ENCODE measurements at regions of chr4 and their contacts with region 1.

Region 1: DNA sequence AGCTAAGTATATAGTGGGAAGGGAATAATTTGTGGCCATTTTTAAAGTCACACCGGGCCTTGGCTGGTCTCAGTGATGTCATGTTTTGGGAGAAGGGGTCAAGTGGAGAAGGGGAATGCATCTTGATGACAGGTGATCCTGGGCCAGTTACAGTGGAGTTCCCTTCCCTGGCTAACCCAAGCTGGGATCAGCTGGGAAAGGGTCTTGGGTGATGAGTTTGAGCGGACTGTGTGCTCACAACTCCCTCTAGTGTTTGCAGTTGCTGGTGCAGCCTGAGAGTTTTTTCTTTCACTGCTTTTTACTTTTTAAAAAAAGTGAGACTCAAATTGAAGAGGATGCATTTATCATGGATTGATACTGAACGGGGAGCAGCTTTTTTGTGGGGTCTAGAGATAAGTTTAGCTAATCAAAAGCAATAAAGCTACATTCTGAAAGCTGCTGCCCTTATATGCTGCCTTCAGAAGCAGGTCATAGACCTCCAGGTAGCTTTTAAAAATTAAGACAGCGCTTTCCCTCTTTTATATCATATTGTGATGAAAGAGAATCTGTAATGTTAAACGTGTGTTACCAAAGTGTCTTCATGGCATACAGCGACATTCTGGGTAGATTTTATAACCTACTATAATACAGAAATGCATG is 164.7 kb downstream of the DCLK2 start:
- DNase-seq: peak; percentile 61
- ATAC-seq: peak; percentile 81
- H3K4me3 Mint-ChIP-seq: no peak overlapping the region
- H3K27ac Mint-ChIP-seq: no peak overlapping the region
- H3K4me1 Mint-ChIP-seq: peaks cover 42% of the 10 kb centered on the region
- H3K27me3 Mint-ChIP-seq: no peaks in the 10 kb centered on the region; the same call in 1 of the 2 replicates
- CTCF ChIP-seq: peak; percentile 87

Region 2: GRCh38 chr4:150078637-150079581 is 164.0 kb before region 1 on chr4:
- CTCF ChIA-PET with region 1: interaction called, 10 read pairs
- POLR2A ChIA-PET with region 1: no interaction called
- DNase-seq: peak; percentile 50
- ATAC-seq: peak; percentile 60
- H3K4me3 Mint-ChIP-seq: peak overlapping the region; percentile 68
- H3K27ac Mint-ChIP-seq: no peak overlapping the region
- H3K4me1 Mint-ChIP-seq: peaks cover 7% of the 10 kb centered on the region; the same call in 1 of the 2 replicates
- H3K27me3 Mint-ChIP-seq: peaks cover 69% of the 10 kb centered on the region
- CTCF ChIP-seq: no peak

Region 3: DNA sequence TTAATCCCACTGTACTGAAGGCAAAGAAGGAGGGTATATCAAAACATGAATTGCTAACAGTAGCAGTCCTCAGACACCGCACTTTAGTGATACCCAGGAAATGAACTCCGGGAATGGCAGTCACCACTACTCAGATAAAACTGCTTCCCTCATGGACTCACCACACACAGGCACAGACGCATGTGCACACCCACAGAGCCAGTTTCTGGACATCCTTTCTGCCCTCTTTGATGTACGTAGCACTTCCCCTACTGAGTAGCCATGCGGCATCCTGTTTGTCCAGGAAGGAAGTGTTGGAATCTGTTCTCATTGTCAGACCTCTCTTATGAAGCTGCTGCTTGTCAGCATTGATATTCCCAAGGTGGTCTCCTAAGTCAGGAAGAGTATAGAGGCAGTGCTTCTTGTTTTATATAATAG is 68.9 kb before region 1 on chr4:
- CTCF ChIA-PET with region 1: no interaction called
- POLR2A ChIA-PET with region 1: no interaction called
- DNase-seq: no peak
- ATAC-seq: no peak
- H3K4me3 Mint-ChIP-seq: no peak overlapping the region
- H3K27ac Mint-ChIP-seq: no peak overlapping the region
- H3K4me1 Mint-ChIP-seq: no peaks in the 10 kb centered on the region
- H3K27me3 Mint-ChIP-seq: no peaks in the 10 kb centered on the region
- CTCF ChIP-seq: no peak

Region 4: GRCh38 chr4:150209140-150209829 is 33.7 kb before region 1 on chr4:
- CTCF ChIA-PET with region 1: interaction called, 13 read pairs
- POLR2A ChIA-PET with region 1: no interaction called
- DNase-seq: peak; percentile 71
- ATAC-seq: peak; percentile 84
- H3K4me3 Mint-ChIP-seq: no peak overlapping the region
- H3K27ac Mint-ChIP-seq: no peak overlapping the region
- H3K4me1 Mint-ChIP-seq: no peaks in the 10 kb centered on the region
- H3K27me3 Mint-ChIP-seq: no peaks in the 10 kb centered on the region
- CTCF ChIP-seq: no peak

Region 5: DNA sequence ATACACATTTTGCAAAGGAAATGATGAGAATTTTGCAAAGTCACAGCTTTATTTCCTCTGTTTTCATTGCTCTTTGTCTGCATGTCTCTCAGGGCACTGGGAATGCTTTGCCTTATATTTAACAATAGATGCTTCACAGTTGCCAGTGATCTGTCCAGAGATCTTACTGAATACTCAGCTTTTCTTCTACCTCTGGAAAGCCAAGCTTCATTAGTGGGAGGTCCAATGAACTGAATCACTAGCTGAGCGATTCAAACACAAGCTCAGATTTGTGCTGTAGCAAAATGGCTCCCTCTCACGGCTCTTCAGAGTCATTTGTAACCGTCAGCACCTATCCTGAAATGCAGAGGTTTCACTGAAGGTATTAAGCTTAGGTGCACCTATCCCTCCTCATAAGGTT is 25.7 kb before region 1 on chr4:
- CTCF ChIA-PET with region 1: interaction called, 15 read pairs
- POLR2A ChIA-PET with region 1: no interaction called
- DNase-seq: no peak
- ATAC-seq: peak; percentile 83
- H3K4me3 Mint-ChIP-seq: no peak overlapping the region
- H3K27ac Mint-ChIP-seq: no peak overlapping the region
- H3K4me1 Mint-ChIP-seq: peaks cover 17% of the 10 kb centered on the region
- H3K27me3 Mint-ChIP-seq: no peaks in the 10 kb centered on the region
- CTCF ChIP-seq: no peak

Region 6: DNA sequence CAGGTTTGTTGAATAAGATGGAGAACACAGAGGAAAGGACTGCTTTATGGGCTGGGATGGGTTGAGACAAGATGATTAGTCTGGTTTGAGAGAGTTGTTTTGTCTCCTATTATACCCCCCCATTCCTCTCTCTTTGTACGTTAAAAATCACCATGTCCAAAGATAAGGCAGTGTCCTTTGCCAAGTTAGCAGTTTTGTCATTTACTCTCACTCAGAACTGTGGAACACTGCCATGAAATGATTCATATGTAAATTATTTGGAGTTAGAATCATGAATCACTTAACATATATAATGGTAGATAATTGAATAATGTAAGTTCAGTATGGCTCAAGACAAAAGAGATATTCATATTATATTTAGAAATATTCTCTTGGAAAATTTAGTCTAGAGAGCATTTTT is 13.4 kb before region 1 on chr4:
- CTCF ChIA-PET with region 1: interaction called, 14 read pairs
- POLR2A ChIA-PET with region 1: no interaction called
- DNase-seq: no peak
- ATAC-seq: no peak
- H3K4me3 Mint-ChIP-seq: no peak overlapping the region
- H3K27ac Mint-ChIP-seq: no peak overlapping the region
- H3K4me1 Mint-ChIP-seq: peaks cover 27% of the 10 kb centered on the region
- H3K27me3 Mint-ChIP-seq: no peaks in the 10 kb centered on the region; the same call in 1 of the 2 replicates
- CTCF ChIP-seq: no peak

Region 7: DNA sequence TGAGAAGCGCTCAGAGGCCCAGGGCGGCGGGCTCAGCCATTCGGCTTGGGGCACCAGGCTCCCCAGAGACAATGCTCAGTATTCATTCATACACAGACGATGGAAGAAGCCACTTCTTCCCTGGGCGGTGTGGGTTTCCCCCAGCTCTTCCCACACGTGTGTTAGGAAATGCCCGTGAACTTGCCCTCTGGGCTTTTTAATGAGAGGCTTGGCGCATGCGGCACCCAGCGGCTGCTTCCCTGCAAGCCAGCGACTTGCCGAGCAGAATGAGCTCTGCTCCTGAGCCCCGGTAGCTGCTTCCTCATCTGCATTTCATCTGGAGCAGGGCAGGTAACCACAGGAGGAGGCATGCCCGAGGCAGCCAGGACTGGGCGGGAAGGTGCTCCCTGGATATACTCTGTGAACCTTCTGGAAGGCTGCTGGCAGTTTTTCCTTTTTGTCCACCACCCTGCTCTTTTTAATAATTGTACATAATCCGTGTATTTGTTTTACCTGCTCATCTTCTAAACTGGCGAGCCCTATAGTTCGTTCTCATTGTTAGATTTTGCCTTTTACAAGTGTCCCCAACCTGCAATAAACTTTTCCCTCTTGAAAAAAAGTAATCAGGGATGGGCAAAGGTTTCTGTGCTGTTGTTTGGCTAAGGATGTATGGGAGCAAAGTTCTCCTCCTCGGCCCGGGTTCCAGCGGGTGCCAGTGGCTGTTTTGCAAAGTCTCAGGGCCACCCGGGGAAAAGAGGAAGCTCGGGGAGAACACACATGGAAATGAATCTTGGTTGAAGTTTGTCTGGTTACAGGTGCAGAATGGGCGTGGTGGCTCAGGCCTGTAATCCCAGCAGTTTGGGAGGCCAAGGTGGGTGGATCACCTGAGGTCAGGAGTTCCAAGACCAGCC is 14.1 kb after region 1 on chr4:
- CTCF ChIA-PET with region 1: interaction called, 15 read pairs
- POLR2A ChIA-PET with region 1: no interaction called
- DNase-seq: peak; percentile 60
- ATAC-seq: peak; percentile 85
- H3K4me3 Mint-ChIP-seq: no peak overlapping the region
- H3K27ac Mint-ChIP-seq: no peak overlapping the region
- H3K4me1 Mint-ChIP-seq: peaks cover 36% of the 10 kb centered on the region
- H3K27me3 Mint-ChIP-seq: no peaks in the 10 kb centered on the region; the same call in 1 of the 2 replicates
- CTCF ChIP-seq: no peak

Region 8: GRCh38 chr4:150886599-150886998 is 643.7 kb after region 1 on chr4:
- CTCF ChIA-PET with region 1: no interaction called
- POLR2A ChIA-PET with region 1: no interaction called
- DNase-seq: no peak
- ATAC-seq: no peak
- H3K4me3 Mint-ChIP-seq: no peak overlapping the region
- H3K27ac Mint-ChIP-seq: peak overlapping the region; percentile 69; the same call in 1 of the 2 replicates
- H3K4me1 Mint-ChIP-seq: no peaks in the 10 kb centered on the region
- H3K27me3 Mint-ChIP-seq: no peaks in the 10 kb centered on the region
- CTCF ChIP-seq: no peak